GM13976 (cell line): ENCODE measurements at regions of chr9 and their contacts with region 1.

Region 1: GRCh38 chr9:84697509-84698114 is 28.1 kb downstream of the NTRK2 start:
- DNase-seq: peak; percentile 63
- CTCF ChIP-seq: peak; percentile 94

Region 2: GRCh38 chr9:84781458-84781857 is 83.8 kb after region 1 on chr9:
- in situ Hi-C with region 1: loop called (anchors 5 kb)
- DNase-seq: peak; percentile 11
- CTCF ChIP-seq: peak; percentile 2

Region 3: GRCh38 chr9:84953797-84954705 is 256.4 kb after region 1 on chr9:
- in situ Hi-C with region 1: loop called (anchors 10 kb)
- DNase-seq: peak; percentile 87
- CTCF ChIP-seq: peak; percentile 92